Right ventricle myocardium inferior (tissue), 1 donor: ENCODE measurements at regions of chr2 and their contacts with region 1.

Region 1: DNA sequence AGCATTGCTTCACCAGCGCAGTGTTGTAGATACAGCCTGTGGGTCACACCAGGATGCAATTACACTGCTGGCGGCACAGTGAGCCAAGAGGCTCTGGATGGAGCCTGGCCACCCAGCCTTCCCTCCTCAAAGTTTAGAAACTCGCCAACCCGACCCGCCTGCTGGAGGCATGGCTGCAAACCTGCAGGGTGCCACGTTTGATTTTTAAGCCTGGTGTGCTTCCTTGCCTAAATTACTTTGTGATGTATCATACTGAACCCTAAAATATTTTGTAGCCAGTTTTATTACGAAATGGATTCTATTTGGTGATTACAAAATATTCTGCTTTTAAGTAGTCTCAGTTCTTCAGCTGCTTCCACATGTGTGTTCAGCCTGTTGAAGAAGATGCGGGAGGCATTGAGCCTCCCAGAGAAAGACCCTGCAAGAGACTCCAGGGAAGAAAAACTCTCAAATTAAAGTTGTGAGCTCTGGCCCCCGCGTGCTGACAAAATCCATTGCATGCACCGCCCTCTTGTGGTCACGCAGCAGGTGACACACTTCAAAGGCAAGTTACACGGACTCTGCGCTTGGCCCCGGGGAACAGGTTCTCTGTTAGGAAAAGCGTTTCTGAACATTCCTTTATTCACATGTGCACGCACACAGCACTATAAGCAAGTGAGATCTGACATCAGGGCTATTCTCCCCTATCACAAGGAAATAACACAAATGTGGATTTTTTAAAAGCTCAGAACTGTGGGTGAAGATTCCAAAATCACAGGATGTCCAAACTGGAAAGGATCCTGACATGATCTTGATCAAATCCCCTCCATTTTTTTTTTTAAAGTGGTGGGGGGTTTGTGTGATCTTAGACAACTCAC is 63.0 kb upstream of the TWIST2 start:
- DNase-seq: peak; percentile 80
- ATAC-seq: peak; percentile 88

Region 2: GRCh38 chr2:238305092-238305862 is 479.6 kb before region 1 on chr2:
- intact Hi-C with region 1: no loop called
- DNase-seq: no peak
- ATAC-seq: no peak

Region 3: DNA sequence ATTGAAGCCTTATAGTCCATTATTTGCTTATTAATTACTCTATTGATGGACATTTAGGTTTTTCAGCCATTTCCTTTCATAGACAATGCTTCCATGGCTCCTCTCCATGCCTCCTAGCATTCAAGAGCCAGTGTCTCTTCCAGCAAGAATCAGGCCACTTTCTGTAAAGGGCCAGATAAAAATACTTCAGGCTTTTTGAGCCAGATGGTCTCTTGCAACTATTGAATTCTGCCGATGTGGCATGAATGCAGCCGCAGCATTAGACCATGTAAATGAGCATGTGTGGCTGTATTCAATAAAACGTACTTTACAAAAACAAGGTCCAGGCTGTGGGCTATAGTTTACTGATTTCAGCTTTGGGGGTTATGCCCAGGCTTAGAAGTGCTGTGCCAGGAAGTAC is 426.1 kb before region 1 on chr2:
- intact Hi-C with region 1: loop called (anchors 5 kb)
- DNase-seq: no peak
- ATAC-seq: no peak

Region 4: GRCh38 chr2:238370823-238371372 is 414.0 kb before region 1 on chr2:
- intact Hi-C with region 1: loop called (anchors 2 kb)
- DNase-seq: no peak
- ATAC-seq: peak; percentile 93

Region 5: DNA sequence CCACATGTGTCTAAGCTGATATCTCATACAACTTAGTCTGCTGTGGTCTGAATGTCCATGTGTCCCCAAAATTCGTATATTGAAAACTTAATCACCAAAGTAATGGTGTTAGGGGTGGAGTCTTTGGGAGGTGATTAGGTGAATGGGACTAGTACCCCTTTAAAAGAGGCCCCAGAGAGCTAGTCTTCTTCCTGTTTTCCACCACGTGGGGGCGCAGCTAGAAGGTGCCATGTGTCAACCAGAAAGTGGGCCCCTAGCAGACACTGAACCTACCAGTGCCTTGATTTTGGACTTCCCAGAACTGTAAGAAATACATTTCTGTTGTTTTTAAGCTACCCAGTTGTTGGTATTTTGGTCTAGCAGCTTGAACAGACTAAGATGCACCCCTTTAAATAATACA is 271.6 kb before region 1 on chr2:
- intact Hi-C with region 1: loop called (anchors 2 kb)
- DNase-seq: no peak
- ATAC-seq: no peak

Region 6: DNA sequence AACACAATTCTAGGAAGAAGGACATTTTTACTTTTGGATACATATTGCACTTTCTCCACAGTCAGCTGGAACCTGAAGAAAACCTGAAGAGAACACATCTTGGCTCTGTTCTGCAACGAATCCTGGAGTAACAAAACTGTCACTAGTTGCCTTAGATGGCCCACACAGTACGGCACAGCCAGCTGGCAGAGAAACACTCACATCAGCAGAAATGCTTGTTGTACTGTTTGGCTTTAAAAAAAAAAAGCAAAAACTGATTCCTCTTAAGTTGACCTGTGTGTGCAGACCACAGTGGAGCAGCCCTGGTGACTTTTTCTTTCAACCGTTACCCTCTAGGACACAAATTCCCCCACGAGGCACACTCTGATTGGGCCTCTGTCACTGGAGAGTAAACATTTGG is 89.4 kb before region 1 on chr2:
- intact Hi-C with region 1: no loop called
- DNase-seq: no peak
- ATAC-seq: no peak

Region 7: GRCh38 chr2:238720232-238720672 is 64.6 kb before region 1 on chr2:
- intact Hi-C with region 1: loop called (anchors 5 kb)
- DNase-seq: no peak
- ATAC-seq: peak; percentile 57